ENCODE measurements at regions of chr17 and their contacts with region 1.

Region 1: DNA sequence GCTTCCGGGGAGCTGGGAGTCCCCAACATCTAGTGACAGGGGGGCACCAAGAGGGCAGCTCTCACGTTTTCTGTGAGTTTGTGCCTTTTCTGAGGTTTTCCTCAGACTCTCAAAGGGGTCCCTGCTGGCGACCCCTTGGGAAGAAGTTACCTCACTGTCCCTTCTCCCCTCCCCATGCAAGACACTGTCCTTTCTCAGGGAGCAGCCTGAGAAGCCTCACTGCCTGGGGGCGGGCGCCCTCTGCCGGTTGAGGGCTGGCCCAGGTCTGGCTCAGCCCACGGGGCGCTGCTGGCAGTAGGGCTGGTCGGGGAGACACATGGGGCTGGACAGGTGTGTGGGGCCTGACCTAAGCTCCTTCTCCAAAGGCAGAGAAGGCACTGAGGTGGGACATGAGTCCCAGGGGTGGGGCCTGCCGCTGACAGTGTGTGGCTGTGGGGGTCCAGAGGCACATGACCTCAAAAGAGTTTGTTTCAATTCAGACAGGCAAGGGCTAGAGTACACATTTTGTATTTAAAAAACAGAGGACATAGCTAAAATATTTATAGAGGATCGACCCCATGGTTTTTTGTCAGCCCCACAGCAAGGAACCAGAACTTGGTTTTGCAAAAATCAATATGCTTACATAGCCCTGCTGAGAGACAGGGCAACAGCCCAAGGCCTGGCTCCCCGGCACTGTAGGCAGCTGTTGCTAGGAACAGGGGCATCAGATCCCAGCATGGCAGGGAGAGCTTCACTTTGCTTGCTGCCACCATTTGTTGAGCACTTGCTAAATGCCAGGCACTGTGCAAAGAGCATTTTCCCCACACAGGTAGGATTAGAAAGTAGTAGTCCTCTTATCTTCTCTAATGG is 18.5 kb upstream of the ALDH3A1 start:
- DNase-seq: no peak
- H3K4me3 ChIP-seq: no peak overlapping the region
- H3K27ac ChIP-seq: no peak overlapping the region
- H3K4me1 ChIP-seq: peaks cover 0 to 25% (median 6%) of the 10 kb centered on the region in 3 donors
- H3K27me3 ChIP-seq: no peaks in the 10 kb centered on the region
- CTCF ChIP-seq: peak; percentile 72 to 98 (median 92)
- POLR2A ChIP-seq: no peak

Region 2: GRCh38 chr17:19362277-19363113 is 404.2 kb before region 1 on chr17 and contains the start of gene B9D1:
- intact Hi-C with region 1: loop called (anchors 10 kb)
- DNase-seq: peak; percentile 59
- H3K4me3 ChIP-seq: peak within 1 kb of the TSS; percentile 43 to 85 (median 73)
- H3K27ac ChIP-seq: peak within 1 kb of the TSS; percentile 78 to 93 (median 89)
- H3K4me1 ChIP-seq: peaks cover 10 to 35% (median 14%) of the 10 kb centered on the region in 3 donors
- H3K27me3 ChIP-seq: no peaks in the 10 kb centered on the region
- CTCF ChIP-seq: peak; percentile 97 to 99 (median 98)
- POLR2A ChIP-seq: peak in 1 of 4 donors; percentile 37
- total RNA-seq, gene B9D1: 9.2 to 24.5 (median 13.0) TPM

Region 3: GRCh38 chr17:19513897-19514488 is 252.7 kb before region 1 on chr17:
- intact Hi-C with region 1: loop called (anchors 2 kb)
- DNase-seq: no peak
- H3K4me3 ChIP-seq: no peak overlapping the region
- H3K27ac ChIP-seq: peak overlapping the region in 2 of 4 donors; percentile 5 to 23
- H3K4me1 ChIP-seq: peaks cover 0 to 6% (median 0%) of the 10 kb centered on the region in 3 donors
- H3K27me3 ChIP-seq: no peaks in the 10 kb centered on the region
- CTCF ChIP-seq: peak; percentile 72 to 92 (median 89)
- POLR2A ChIP-seq: no peak

Region 4: DNA sequence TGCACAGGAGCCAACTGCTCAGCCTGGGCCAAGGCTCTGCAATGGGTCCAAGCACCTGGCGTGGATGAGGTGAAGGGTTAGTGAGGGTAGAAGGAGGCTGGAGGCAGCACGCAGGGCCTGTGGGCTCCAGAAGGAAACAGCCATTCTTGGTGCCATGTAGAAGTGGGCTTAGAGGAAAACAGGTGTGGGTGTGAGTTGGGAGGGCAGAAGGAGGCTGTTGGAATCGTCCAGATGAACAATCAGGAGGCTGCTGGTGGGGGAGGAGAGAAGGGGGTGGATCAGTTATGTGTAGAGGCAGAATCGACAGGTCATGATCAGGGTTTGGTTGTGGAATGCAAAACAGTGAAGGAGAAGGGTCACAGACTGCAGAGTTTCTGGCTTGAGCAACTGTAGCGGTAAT is 169.8 kb before region 1 on chr17:
- intact Hi-C with region 1: no loop called
- DNase-seq: no peak
- H3K4me3 ChIP-seq: no peak overlapping the region
- H3K27ac ChIP-seq: no peak overlapping the region
- H3K4me1 ChIP-seq: no peaks in the 10 kb centered on the region
- H3K27me3 ChIP-seq: no peaks in the 10 kb centered on the region
- CTCF ChIP-seq: no peak
- POLR2A ChIP-seq: no peak

Region 5: DNA sequence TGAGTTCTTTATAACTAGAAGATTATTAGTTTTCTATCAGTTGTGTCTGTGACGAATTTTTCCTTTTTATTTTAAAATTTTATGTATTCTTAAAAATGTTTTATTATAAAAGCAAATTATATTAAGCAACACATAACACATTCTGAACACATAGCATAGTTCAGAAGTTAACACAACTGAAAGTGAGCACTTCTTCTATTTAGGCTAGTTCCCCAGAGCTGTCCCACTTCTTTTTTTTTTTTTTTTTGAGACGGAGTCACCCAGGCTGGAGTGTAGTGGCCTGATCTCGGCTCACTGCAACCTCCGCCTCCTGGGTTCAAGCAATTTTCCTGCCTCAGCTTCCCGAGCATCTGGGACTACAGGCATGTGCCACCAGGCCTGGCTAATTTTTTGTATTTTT is 155.8 kb before region 1 on chr17:
- intact Hi-C with region 1: no loop called
- DNase-seq: no peak
- H3K4me3 ChIP-seq: no peak overlapping the region
- H3K27ac ChIP-seq: no peak overlapping the region
- H3K4me1 ChIP-seq: no peaks in the 10 kb centered on the region
- H3K27me3 ChIP-seq: no peaks in the 10 kb centered on the region
- CTCF ChIP-seq: no peak
- POLR2A ChIP-seq: no peak

Region 6: DNA sequence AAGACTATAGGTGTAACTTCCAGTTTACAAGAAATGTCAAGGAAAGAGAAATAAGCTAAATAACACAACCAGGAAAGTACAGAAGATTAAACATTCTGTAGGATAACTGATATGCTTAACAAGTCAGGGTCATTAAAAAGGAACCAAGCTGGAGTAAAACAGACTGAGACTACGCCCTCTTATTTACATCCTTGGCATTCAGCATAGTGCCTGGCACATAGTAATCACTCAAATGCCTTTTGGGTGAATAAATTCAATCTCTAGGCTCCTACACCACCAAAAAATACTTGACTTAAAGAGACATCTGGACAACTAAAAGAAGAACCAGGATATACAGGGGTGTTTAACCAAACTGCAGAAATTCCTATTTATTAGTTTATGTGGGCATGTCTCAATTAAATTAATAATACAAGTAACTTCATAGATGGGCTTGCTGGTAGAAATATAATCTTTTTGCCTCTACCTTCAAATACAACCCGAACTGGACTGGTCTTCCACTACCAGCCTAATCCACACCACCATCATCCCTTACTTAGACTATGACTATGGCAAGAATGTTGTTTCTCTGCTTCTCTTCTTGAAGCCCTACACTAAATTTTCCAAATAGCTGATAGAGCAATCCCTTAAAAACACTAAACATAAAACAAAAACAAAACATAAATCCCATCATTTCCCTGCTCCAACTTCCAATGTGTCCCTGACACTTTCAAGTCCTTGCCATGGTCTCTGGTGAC is 148.8 kb after region 1 on chr17:
- intact Hi-C with region 1: no loop called
- DNase-seq: no peak
- H3K4me3 ChIP-seq: no peak overlapping the region
- H3K27ac ChIP-seq: no peak overlapping the region
- H3K4me1 ChIP-seq: no peaks in the 10 kb centered on the region
- H3K27me3 ChIP-seq: no peaks in the 10 kb centered on the region
- CTCF ChIP-seq: no peak
- POLR2A ChIP-seq: no peak

Measured in esophagus squamous epithelium (tissue), 5 donors.